HCT116 (cell line): ENCODE measurements at regions of chr16 and their contacts with region 1.

Region 1: GRCh38 chr16:86751076-86752030 is 173.0 kb downstream of the FOXL1 start:
- DNase-seq: no peak
- ATAC-seq: peak; percentile 52; the same call in 1 of the 2 replicates
- H3K4me3 ChIP-seq: no peak overlapping the region
- H3K27ac ChIP-seq: no peak overlapping the region
- H3K4me1 ChIP-seq: peaks cover 3 to 9% of the 10 kb centered on the region in 2 experiments; a peak in 2 of 4 replicates
- H3K27me3 ChIP-seq: no peaks in the 10 kb centered on the region; the same call in 1 of the 2 replicates
- CTCF ChIP-seq: no peak
- POLR2A ChIP-seq: no peak
- RAD21 ChIP-seq: no peak

Region 2: DNA sequence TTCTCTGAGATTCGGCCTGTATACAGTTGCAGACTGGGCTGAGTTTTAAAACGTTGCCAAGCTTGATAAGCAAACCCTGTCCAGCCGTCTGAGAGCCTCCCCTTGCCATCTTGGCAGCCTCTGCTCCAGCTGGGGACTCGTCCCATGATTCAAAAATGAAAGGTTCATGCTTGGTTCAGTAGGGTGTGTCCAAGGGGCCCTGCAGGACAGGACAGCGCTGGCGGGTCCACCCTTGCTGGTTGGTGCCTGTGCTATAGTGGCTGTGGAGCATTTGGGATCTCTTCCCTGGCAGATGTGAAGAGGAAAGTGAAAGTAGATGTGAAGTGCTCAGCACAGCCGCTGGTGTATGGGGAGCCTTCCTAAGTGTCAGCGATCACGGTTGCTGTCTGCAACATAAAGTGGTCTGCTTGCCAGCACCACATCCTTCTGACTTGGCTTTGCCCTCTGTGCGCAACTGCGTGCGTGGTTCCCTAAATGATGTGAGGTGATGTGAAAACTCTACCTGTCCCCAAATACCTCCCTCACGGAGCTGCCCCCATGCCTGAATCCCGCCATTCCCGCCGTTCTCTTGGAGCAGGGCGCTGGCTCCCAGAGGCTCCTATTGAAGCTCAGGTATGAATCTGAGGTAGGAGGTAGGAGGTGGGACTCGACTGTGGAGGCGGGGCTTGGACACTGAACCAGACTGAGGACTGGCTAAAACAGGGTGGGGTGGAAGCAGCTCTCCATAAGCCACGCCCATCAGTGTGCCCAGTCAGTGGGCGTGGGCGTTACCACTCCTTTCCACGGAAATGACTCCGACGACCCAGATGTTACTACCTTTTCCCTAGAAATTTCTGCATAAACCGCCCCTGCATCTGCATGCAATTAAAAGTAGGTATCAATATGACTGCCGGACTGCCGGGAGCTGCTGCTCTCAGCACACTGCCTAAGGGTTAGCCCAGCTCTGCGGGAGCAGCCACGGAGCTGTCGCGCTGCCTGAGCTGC is 132.2 kb before region 1 on chr16:
- CTCF ChIA-PET with region 1: no interaction called
- POLR2A ChIA-PET with region 1: no interaction called
- RAD21 ChIA-PET with region 1: no interaction called
- intact Hi-C with region 1: no loop called
- DNase-seq: no peak
- ATAC-seq: peak; percentile 80
- H3K4me3 ChIP-seq: no peak overlapping the region
- H3K27ac ChIP-seq: no peak overlapping the region
- H3K4me1 ChIP-seq: peaks cover 0 to 8% of the 10 kb centered on the region in 2 experiments; a peak in 1 of 4 replicates
- H3K27me3 ChIP-seq: no peaks in the 10 kb centered on the region
- CTCF ChIP-seq: no peak
- POLR2A ChIP-seq: no peak
- RAD21 ChIP-seq: no peak

Region 3: GRCh38 chr16:86653285-86654006 is 97.9 kb before region 1 on chr16:
- CTCF ChIA-PET with region 1: no interaction called
- POLR2A ChIA-PET with region 1: no interaction called
- RAD21 ChIA-PET with region 1: no interaction called
- intact Hi-C with region 1: no loop called
- DNase-seq: no peak
- ATAC-seq: no peak
- H3K4me3 ChIP-seq: no peak overlapping the region
- H3K27ac ChIP-seq: no peak overlapping the region
- H3K4me1 ChIP-seq: no peaks in the 10 kb centered on the region
- H3K27me3 ChIP-seq: peaks cover 3% of the 10 kb centered on the region; the same call in 1 of the 2 replicates
- CTCF ChIP-seq: no peak
- POLR2A ChIP-seq: no peak
- RAD21 ChIP-seq: no peak

Region 4: GRCh38 chr16:86664533-86665318 is 86.6 kb before region 1 on chr16:
- CTCF ChIA-PET with region 1: no interaction called
- POLR2A ChIA-PET with region 1: no interaction called
- RAD21 ChIA-PET with region 1: no interaction called
- intact Hi-C with region 1: no loop called
- DNase-seq: peak; percentile 96
- ATAC-seq: peak; percentile 86
- H3K4me3 ChIP-seq: peak overlapping the region; percentile 29 to 57
- H3K27ac ChIP-seq: peak overlapping the region; percentile 92
- H3K4me1 ChIP-seq: peaks cover 28 to 71% of the 10 kb centered on the region in 2 experiments
- H3K27me3 ChIP-seq: no peaks in the 10 kb centered on the region
- CTCF ChIP-seq: 0 out of 6 replicates have a peak, but pooled peaks of 2 of the 3 experiments have one; percentile 7 to 8
- POLR2A ChIP-seq: no peak
- RAD21 ChIP-seq: peak; percentile 49

Region 5: DNA sequence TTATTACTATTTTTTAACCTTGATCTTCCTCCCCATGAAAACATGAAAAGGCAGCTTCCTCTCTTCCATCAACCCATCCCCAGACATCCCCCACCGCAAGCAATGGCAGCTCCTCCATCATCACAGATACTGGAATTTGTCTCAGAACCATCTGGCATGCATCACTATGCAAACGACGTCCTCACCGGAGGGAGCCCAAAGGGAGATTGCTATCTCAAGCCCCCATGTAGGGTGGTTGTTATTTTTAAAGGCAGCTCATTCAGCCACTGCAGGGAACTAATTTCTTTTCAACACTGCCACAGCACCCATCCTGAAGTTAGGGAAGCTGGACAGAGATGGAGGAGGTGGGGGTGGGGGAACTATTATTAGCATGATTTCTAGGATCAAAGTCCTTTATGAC is 49.5 kb after region 1 on chr16:
- CTCF ChIA-PET with region 1: no interaction called
- POLR2A ChIA-PET with region 1: no interaction called
- RAD21 ChIA-PET with region 1: no interaction called
- intact Hi-C with region 1: loop called (anchors 5 kb)
- DNase-seq: no peak
- ATAC-seq: no peak
- H3K4me3 ChIP-seq: no peak overlapping the region
- H3K27ac ChIP-seq: no peak overlapping the region
- H3K4me1 ChIP-seq: no peaks in the 10 kb centered on the region
- H3K27me3 ChIP-seq: peaks cover 83% of the 10 kb centered on the region
- CTCF ChIP-seq: no peak
- POLR2A ChIP-seq: no peak
- RAD21 ChIP-seq: no peak

Region 6: GRCh38 chr16:88368036-88368435 is 1616.7 kb after region 1 on chr16:
- CTCF ChIA-PET with region 1: no interaction called
- POLR2A ChIA-PET with region 1: no interaction called
- RAD21 ChIA-PET with region 1: no interaction called
- intact Hi-C with region 1: no loop called
- DNase-seq: no peak
- ATAC-seq: no peak
- H3K4me3 ChIP-seq: no peak overlapping the region
- H3K27ac ChIP-seq: no peak overlapping the region
- H3K4me1 ChIP-seq: no peaks in the 10 kb centered on the region
- H3K27me3 ChIP-seq: peaks cover 11% of the 10 kb centered on the region; the same call in 1 of the 2 replicates
- CTCF ChIP-seq: no peak
- POLR2A ChIP-seq: no peak
- RAD21 ChIP-seq: no peak